Activated T-helper 1 cell treated with anti-CD3 and anti-CD28 coated beads, Interleukin-12 subunit alpha, Interleukin-12 subunit beta, Interleukin-2, Interleukin-4 antibody, amounts not matched to agents 30 ng/mL and 10 ng/mL and 1 ng/mL, durations not matched to agents 14 hours and 24 hours and 36 hours (primary cell): ENCODE measurements at regions of chrX and their contacts with region 1.

Region 1: GRCh38 chrX:47650164-47651042 is at the start of gene ELK1:
- DNase-seq: peak; percentile 85
- H3K4me3 Mint-ChIP-seq: peak within 1 kb of the TSS; percentile 95
- H3K27ac Mint-ChIP-seq: peak within 1 kb of the TSS; percentile 96
- H3K4me1 Mint-ChIP-seq: peaks cover 66% of the 10 kb centered on the region
- H3K27me3 Mint-ChIP-seq: no peaks in the 10 kb centered on the region
- total RNA-seq, gene ELK1: 99.3 TPM in 2 replicates

Region 2: DNA sequence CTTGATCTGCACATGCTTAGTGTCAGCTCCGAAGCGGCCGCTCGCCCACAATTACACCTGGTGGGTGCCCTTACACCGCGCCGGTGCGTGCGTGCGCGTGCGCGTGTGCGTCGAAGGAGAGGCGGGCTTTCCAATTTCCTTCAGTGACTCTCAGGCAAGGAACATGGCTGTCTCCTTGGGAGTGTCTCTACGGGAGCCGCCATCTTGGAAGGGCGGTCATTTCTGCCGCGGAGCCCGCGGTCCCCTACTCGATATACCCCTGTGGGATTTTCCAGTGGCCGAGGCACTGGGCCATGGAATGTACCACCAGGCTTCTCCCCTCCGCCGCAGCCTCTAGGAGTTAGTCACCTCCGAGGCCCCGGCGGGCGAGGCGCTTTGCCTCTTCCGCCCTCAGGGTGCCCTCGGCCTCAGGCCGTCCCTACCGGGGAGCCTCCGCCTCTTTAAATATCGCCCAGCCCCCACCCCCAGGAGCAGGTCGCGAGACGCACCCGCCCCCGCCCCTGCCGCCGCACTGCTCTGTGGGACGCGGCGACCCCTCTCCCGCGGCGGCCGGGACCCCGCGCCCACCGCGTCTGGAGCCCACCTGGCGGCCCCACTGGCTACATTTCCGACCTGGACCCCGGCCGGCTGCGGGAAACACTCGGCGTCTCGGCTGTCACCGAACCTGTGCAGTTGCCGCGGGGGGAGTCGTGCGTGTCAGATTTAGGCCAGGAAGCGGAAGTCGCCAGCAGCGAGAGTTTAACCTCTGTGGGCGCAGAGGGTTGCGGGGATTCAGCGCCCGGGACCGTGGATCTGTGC is 167.7 kb before region 1 on chrX and contains the start of gene ZNF41:
- intact Hi-C with region 1: loop called (anchors 1 kb)
- DNase-seq: peak; percentile 63
- H3K4me3 Mint-ChIP-seq: peak within 1 kb of the TSS; percentile 92
- H3K27ac Mint-ChIP-seq: peak within 1 kb of the TSS; percentile 91
- H3K4me1 Mint-ChIP-seq: peaks cover 26% of the 10 kb centered on the region
- H3K27me3 Mint-ChIP-seq: no peaks in the 10 kb centered on the region
- total RNA-seq, gene ZNF41: 10.7 and 10.9 TPM in 2 replicates

Region 3: GRCh38 chrX:47633689-47634590 is 16.5 kb before region 1 on chrX:
- intact Hi-C with region 1: loop called (anchors 1 kb)
- DNase-seq: no peak
- H3K4me3 Mint-ChIP-seq: no peak overlapping the region
- H3K27ac Mint-ChIP-seq: no peak overlapping the region
- H3K4me1 Mint-ChIP-seq: peaks cover 27% of the 10 kb centered on the region
- H3K27me3 Mint-ChIP-seq: peaks cover 2% of the 10 kb centered on the region

Region 4: DNA sequence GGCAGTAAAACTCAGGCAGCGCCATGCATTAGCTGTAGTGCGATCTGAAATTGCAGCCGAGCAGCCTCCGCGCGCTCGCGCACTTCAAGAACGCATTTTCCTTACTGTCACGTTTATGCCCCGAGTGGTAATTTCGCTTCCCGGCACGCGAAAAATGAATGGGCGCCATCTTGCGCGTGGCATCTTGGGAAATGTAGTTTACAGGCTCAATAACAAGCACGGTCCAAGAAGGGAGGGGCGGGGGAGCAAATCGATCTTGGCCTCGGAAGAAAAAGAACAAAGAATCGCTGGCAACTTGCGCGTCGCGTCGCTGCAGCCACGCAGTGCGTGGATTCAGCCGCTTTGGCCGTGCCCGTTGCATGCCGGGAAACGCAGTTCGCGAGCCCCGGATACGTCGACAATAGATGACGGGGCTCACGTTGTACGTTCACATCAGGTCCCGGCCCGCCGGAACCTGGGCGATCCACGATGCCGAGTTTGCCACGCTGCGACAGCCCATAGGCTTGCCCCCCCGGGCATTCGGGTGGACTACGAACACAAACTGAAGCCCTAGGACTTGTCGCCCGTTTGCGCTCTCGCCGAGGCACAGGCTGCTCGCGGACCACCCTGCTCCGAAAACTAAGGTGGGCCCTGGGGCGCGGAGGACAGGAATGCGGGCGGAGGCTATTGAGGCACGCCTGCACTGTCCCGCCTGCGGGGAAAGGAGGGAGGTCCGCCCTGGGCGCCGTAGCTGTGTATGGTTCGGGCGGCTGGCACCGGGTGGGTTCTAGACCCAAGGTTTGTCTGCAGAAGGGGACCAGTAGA is 825.6 kb after region 1 on chrX and contains the start of gene FTSJ1:
- intact Hi-C with region 1: loop called (anchors 10 kb)
- DNase-seq: peak; percentile 86
- H3K4me3 Mint-ChIP-seq: peak within 1 kb of the TSS; percentile 98
- H3K27ac Mint-ChIP-seq: peak within 1 kb of the TSS; percentile 90
- H3K4me1 Mint-ChIP-seq: peaks cover 20% of the 10 kb centered on the region
- H3K27me3 Mint-ChIP-seq: peaks cover 2% of the 10 kb centered on the region
- total RNA-seq, gene FTSJ1: 96.2 and 103 TPM in 2 replicates